Activated CD4-positive, alpha-beta memory T cell treated with anti-CD3 and anti-CD28 coated beads for 36 hours (primary cell): ENCODE measurements at regions of chr1 and their contacts with region 1.

Region 1: DNA sequence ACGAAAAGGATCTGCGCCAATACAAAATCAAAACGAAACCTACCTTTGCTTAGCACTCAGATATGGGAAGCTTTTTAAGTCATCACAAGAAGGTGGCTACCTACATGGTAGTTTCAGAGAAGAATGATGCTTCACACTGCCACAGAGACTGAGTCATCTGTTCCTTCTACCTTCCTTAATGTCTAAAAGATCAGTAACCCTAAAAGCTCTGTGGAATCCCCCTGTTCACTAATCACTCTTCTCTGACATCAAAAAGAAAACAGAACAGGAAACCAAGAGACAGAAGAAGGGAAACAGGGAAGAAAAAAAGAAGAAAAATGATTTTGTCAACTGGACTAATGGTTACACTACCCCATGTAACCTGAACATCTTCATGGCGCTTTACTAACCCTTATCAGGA is 177.2 kb downstream of the SMYD3 start:
- DNase-seq: peak; percentile 42
- H3K4me3 Mint-ChIP-seq: no peak overlapping the region
- H3K27ac Mint-ChIP-seq: peak overlapping the region; percentile 72
- H3K4me1 Mint-ChIP-seq: peaks cover 49% of the 10 kb centered on the region
- H3K27me3 Mint-ChIP-seq: no peaks in the 10 kb centered on the region

Region 2: DNA sequence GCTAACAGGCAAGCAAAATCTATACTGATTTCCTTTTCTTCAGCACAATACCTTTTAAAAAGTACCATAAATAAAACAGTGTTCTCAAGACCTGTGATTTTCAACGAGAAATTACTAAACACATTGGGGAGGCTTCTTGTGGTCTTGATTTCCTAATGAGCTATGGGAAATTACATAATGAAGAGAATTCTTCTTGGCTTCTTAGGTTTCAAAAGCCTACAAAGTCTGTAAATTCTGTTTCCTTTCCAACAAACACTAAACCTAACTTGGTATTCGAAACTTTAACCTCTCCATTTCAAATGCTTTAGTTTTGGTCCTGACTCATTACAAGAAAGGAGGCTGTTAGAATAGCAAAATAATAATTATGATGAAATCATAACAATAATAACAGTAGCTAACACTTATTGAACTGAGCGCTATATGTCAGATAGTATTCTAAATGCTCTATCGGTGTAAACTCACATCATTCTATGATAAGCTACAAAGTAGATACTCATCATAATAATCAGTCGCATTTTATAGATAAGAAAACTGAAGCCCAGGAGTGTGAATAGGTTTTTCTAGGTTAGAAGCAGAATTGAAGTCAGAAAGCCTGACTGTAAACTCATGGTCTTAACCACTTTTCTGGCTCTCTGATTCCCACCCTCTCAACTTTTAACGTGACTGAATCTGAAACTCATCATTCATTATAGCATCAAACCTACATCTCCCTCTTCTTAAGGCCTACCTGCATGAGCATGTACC is 309.5 kb before region 1 on chr1:
- CTCF ChIA-PET with region 1: no interaction called
- POLR2A ChIA-PET with region 1: no interaction called
- intact Hi-C with region 1: loop called (anchors 1 kb)
- DNase-seq: no peak
- H3K4me3 Mint-ChIP-seq: no peak overlapping the region
- H3K27ac Mint-ChIP-seq: peak overlapping the region; percentile 2
- H3K4me1 Mint-ChIP-seq: peaks cover 20% of the 10 kb centered on the region
- H3K27me3 Mint-ChIP-seq: no peaks in the 10 kb centered on the region

Region 3: DNA sequence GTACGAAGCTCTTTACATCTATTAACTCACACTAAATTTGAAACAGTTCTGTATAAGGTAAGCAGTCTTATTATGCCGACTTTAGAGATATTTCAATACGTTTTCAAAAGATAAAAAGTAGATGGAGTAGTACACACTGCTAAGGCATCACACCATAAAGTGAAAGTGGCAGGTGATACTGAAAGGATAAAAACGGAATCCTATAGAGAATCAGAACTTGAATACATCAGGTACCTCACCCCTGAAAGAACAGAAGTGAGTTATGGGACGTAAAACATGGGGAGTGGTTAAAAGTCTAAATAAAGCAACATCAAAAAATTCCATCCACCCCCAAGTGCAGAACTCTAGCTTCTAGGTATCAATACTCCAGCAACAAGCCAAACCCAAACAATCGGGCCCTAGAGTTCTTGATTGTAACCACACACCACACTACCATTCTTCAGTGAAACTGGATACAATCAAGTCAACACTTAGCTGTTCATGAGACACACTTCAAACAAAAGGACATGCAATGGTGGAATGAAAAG is 34.6 kb after region 1 on chr1:
- CTCF ChIA-PET with region 1: interaction called, 3 read pairs
- POLR2A ChIA-PET with region 1: interaction called, 10 read pairs
- intact Hi-C with region 1: loop called (anchors 1 kb)
- DNase-seq: peak; percentile 35
- H3K4me3 Mint-ChIP-seq: peak overlapping the region; percentile 49
- H3K27ac Mint-ChIP-seq: peak overlapping the region; percentile 64
- H3K4me1 Mint-ChIP-seq: peaks cover 20% of the 10 kb centered on the region
- H3K27me3 Mint-ChIP-seq: no peaks in the 10 kb centered on the region

Region 4: GRCh38 chr1:246476771-246477170 is 146.9 kb after region 1 on chr1:
- CTCF ChIA-PET with region 1: no interaction called
- POLR2A ChIA-PET with region 1: no interaction called
- intact Hi-C with region 1: loop called (anchors 2 kb)
- DNase-seq: no peak
- H3K4me3 Mint-ChIP-seq: no peak overlapping the region
- H3K27ac Mint-ChIP-seq: no peak overlapping the region
- H3K4me1 Mint-ChIP-seq: peaks cover 22% of the 10 kb centered on the region
- H3K27me3 Mint-ChIP-seq: no peaks in the 10 kb centered on the region

Region 5: DNA sequence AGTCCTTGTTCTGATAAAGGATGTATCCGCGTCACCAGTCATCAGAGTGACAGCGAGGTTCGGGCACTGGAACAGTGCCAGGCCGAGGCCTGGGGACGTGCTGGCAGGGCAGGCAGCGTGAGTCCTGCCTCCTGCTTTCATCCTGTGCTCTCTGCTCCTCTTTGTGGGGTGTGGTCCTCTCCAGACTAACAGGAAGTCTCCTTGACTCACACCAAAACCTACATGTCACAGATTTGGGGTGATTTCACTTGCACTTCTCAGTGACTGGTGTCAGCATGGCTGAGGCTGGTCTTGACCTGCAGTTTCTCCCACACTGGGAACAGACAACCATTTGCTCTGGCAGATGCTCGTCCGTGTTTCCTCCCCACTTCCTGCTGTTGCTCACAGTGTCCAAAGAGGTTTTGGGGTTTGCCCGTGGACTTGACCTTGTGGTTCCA is 1077.3 kb after region 1 on chr1:
- CTCF ChIA-PET with region 1: no interaction called
- POLR2A ChIA-PET with region 1: no interaction called
- intact Hi-C with region 1: loop called (anchors 10 kb)
- DNase-seq: peak; percentile 82
- H3K4me3 Mint-ChIP-seq: peak overlapping the region; percentile 45
- H3K27ac Mint-ChIP-seq: peak overlapping the region; percentile 63
- H3K4me1 Mint-ChIP-seq: peaks cover 43% of the 10 kb centered on the region
- H3K27me3 Mint-ChIP-seq: peaks cover 6% of the 10 kb centered on the region